Calu3 (cell line): ENCODE measurements at regions of chr2 and their contacts with region 1.

Region 1: DNA sequence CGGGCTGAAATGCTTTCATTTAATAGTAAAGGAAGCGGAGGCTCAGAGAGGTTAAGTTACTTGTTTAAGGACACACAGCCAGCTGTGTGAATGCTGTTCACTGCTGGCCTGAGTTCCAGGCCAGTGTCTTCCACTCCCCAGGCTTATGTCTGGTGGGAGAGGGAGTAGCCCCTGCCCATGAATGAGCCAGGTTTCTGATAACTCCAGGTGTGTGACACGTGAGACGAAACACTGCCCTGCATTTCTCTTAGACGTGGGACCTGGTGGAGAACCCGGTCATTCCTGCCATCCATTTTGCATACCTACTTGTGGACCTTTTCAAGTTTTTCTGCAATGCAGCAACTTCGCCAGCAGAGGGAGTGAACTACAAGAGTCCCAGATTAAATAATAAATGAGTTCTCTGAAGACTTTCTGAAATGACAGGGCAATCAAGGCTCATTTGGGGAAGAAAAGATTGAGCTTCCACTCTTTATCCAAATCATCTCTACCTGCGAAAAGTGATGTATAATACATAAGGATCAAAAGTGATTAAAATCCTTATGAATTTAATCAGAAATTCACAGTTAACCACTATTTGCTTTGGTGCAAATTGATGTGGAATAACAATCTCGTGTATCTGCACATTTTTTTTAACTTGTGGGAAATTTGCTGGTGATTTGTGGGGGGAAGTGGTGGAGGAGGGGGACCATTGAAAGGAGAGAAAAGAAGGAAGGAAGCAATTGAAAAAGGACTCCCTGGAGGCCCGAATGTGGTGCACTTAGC is 79.4 kb upstream of the ASB18 start:
- DNase-seq: peak; percentile 50
- H3K4me3 Mint-ChIP-seq: no peak overlapping the region
- H3K27ac Mint-ChIP-seq: no peak overlapping the region
- H3K4me1 Mint-ChIP-seq: no peaks in the 10 kb centered on the region
- H3K27me3 Mint-ChIP-seq: peaks cover 25% of the 10 kb centered on the region
- CTCF ChIP-seq: peak; percentile 50

Region 2: DNA sequence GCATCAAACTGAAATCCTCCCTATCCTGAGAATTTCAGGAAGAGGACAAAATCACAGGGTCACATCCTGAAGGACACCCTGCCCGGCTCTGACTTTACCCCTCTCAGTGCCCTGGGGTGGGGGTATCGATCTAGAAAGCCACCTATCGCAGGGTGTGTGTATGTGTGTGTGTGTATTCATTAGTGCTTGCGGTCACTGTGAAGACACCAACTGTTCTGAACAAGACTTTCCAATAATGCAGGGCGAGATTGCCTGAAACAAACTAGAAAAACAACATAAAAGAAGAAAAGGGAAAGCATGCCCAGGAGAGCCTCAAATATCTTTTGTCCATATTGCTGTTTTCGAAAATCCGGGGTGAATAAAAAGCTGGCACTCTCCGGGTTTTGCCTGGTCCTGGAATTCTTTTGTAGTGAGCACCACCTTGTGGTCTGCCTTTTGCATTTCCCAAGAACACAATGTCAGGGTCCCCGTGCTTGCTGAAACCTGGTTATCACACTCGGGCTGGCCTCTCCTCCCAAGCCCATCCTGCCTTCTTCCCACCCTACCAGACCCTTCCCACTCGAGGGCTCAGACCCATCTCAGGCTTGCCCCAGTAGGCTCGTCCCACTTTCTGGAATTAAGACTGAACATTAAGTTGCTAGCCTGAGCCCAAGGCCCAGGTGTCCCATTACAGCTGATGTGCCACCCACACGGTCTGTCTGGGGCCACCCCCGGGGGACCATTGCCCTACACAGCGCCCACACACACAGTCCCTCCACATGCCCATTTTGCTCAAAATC is 717.1 kb after region 1 on chr2:
- CTCF ChIA-PET with region 1: interaction called, 3 read pairs
- intact Hi-C with region 1: loop called (anchors 2 kb)
- DNase-seq: peak; percentile 66
- H3K4me3 Mint-ChIP-seq: no peak overlapping the region
- H3K27ac Mint-ChIP-seq: no peak overlapping the region
- H3K4me1 Mint-ChIP-seq: no peaks in the 10 kb centered on the region
- H3K27me3 Mint-ChIP-seq: no peaks in the 10 kb centered on the region
- CTCF ChIP-seq: peak; percentile 62

Region 3: GRCh38 chr2:237072067-237072931 is 728.7 kb after region 1 on chr2:
- CTCF ChIA-PET with region 1: no interaction called
- intact Hi-C with region 1: loop called (anchors 1 kb)
- DNase-seq: peak; percentile 81
- H3K4me3 Mint-ChIP-seq: no peak overlapping the region
- H3K27ac Mint-ChIP-seq: no peak overlapping the region
- H3K4me1 Mint-ChIP-seq: peaks cover 39% of the 10 kb centered on the region
- H3K27me3 Mint-ChIP-seq: no peaks in the 10 kb centered on the region
- CTCF ChIP-seq: peak; percentile 97